Dorsolateral prefrontal cortex (tissue), 120 donors: ENCODE measurements at regions of chr5 and their contacts with region 1.

Region 1: DNA sequence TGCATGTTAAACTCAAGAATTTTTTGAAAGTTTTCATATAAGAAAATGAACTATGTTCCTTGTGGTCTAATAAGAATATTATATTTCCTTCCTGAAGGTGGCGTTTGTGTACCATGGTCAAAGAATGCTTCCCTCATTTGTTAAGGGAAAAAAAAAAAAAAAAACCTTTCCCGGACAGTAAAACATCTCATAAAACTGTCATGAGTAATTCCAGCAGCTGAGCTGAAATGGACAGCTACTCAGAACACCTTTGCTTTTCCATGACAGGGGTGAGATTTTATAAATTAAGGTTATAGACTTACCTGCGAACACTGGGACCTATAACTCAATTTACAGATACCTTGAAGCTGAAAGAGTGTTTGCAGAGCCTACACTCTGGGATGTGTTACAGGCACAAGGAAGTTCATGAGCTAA is 113.2 kb upstream of the RANBP3L start:
- DNase-seq: no peak
- H3K4me3 ChIP-seq: no peak overlapping the region
- H3K27ac ChIP-seq: peak overlapping the region in 2 of 59 donors; percentile 8 to 38
- H3K27me3 ChIP-seq: no peaks in the 10 kb centered on the region
- CTCF ChIP-seq: peak; percentile 49 to 90 (median 72)

Region 2: GRCh38 chr5:36507332-36507952 is 92.6 kb after region 1 on chr5:
- intact Hi-C with region 1: loop called (anchors 5 to 10 kb)
- DNase-seq: peak; percentile 54 to 75 (median 64)
- H3K4me3 ChIP-seq: no peak overlapping the region
- H3K27ac ChIP-seq: no peak overlapping the region
- H3K27me3 ChIP-seq: no peaks in the 10 kb centered on the region
- CTCF ChIP-seq: peak; percentile 54 to 91 (median 79)

Region 3: GRCh38 chr5:36584009-36584875 is 169.4 kb after region 1 on chr5:
- intact Hi-C with region 1: loop called in 1 of 2 experiments (anchors 10 kb)
- DNase-seq: no peak
- H3K4me3 ChIP-seq: peak overlapping the region in 2 of 59 donors; percentile 4 to 17
- H3K27ac ChIP-seq: peak overlapping the region in 57 of 59 donors; percentile 1 to 87 (median 74)
- H3K27me3 ChIP-seq: no peaks in the 10 kb centered on the region
- CTCF ChIP-seq: no peak

Region 4: GRCh38 chr5:36611520-36612274 is 196.8 kb after region 1 on chr5:
- intact Hi-C with region 1: loop called in 1 of 2 experiments (anchors 10 kb)
- DNase-seq: peak in 1 of 10 donors; percentile 39
- H3K4me3 ChIP-seq: peak overlapping the region in 58 of 59 donors; percentile 17 to 85 (median 70)
- H3K27ac ChIP-seq: peak overlapping the region in 58 of 59 donors; percentile 25 to 99 (median 96)
- H3K27me3 ChIP-seq: peaks cover 0 to 8% (median 0%) of the 10 kb centered on the region in 45 donors
- CTCF ChIP-seq: peak in 2 of 56 donors; percentile 13 to 20